ENCODE measurements at regions of chr9 and their contacts with region 1.

Region 1: DNA sequence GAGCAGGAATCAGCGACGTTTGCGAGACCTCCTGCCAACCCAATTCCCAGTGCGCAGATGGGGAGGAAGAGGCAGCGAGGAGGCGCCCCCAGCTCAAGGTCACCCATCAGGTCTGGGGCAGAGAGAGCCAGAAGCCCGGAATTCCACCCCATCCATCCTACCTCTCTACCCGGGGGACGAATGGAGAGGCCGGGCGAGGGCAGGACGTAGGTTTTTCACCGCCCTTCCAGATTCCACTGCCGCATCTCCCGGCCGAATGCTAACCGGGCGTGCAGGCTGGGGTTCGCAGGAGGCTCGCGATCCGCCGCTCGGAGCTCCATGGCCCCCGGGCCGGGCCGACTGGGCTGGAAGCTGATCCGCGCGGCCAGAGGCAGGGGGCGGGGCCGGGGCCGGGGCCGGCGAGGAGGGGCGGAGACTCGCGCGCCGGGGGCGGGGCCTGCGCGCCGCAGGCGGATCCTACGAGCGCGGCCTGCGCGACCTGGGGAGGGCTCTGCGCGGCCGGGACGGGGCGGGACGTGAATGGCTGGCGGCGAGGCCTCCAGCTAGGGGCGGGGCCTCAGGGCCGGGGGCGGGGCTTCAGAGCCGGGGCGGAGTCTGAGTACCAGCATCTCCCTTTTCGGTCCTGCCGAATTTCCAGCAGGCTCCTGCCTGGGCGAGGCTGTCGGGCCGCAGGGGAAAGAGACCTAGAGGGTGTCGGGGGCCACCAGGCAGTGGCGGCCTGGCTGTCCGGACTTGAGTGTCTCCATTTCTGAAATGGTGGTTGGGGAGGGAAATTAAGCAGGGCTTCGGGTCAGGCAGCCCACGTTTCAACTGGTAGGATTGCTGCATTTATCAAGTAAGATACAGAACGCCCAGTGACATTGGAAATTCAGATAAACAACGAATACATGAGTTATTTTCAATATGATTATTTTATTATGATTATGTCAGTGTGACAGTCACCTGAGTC is at the start of gene ST6GALNAC4:
- DNase-seq: peak; percentile 99
- CTCF ChIP-seq: no peak

Region 2: DNA sequence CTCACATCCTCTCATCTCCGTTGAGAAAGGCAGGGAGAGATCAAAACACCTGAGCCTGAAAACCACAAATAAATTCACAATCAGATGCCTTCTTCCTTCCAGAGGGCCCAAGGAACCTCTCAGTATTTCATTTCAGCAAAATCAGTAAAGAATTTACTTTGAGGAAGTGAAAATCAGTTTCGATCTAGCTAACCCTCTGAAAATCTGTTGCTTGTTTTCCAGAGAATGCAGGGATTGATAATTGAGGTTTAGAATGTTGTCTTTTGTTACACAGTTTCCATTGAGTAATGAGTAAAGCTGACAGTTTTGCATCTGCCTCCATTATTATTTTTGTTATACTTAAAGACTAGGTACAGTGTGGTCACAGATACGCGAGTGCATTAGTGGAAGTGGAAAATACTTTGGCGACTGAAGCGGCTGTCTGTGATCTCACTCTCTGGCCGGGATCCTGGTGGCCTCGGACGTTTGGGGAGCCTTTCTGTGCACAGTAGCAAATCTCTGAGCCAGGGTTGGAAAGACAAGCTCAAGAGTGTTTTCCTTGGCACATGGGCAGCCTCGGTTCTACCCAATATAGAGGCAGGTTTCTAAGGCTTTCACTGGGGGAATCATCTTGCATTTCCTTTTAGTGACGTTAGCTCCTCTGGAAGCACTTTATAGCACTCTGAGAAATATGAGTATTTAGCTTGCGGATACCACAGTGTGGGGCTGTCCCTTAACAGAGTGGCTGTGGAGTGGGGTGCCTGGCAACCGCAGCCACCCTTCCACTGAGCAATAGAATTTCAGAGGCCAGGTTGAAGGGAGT is 762.3 kb before region 1 on chr9:
- in situ Hi-C with region 1: no loop called
- DNase-seq: peak; percentile 46
- CTCF ChIP-seq: no peak

Region 3: GRCh38 chr9:127586537-127586936 is 330.4 kb before region 1 on chr9:
- in situ Hi-C with region 1: loop called (anchors 25 kb)
- DNase-seq: peak; percentile 65
- CTCF ChIP-seq: peak; percentile 87

Region 4: DNA sequence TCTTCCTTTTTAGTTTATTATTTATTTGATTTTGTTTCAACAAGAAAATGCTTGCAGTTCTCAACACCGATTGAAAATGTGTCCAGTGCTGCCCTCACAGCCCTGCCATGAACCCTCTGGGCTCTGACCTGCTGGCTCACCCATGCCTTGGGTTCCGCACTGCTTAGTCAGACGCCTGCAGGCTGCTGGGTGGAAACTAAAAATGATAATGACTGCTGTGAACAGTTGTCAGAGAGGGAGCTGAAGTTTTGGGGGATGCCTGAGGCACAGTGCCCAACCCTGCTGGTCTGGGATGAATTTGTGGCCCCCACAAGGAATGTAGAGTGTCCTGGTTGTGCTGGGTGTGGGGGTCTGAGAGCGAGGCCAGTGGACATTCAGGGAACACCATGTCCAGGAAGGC is 232.4 kb before region 1 on chr9:
- in situ Hi-C with region 1: no loop called
- DNase-seq: no peak
- CTCF ChIP-seq: no peak

Region 5: GRCh38 chr9:127785023-127785932 is 131.7 kb before region 1 on chr9:
- in situ Hi-C with region 1: loop called (anchors 10 kb)
- DNase-seq: peak; percentile 94
- CTCF ChIP-seq: peak; percentile 83

Region 6: GRCh38 chr9:127796225-127796813 is 120.6 kb before region 1 on chr9:
- in situ Hi-C with region 1: no loop called
- DNase-seq: no peak
- CTCF ChIP-seq: no peak

Region 7: DNA sequence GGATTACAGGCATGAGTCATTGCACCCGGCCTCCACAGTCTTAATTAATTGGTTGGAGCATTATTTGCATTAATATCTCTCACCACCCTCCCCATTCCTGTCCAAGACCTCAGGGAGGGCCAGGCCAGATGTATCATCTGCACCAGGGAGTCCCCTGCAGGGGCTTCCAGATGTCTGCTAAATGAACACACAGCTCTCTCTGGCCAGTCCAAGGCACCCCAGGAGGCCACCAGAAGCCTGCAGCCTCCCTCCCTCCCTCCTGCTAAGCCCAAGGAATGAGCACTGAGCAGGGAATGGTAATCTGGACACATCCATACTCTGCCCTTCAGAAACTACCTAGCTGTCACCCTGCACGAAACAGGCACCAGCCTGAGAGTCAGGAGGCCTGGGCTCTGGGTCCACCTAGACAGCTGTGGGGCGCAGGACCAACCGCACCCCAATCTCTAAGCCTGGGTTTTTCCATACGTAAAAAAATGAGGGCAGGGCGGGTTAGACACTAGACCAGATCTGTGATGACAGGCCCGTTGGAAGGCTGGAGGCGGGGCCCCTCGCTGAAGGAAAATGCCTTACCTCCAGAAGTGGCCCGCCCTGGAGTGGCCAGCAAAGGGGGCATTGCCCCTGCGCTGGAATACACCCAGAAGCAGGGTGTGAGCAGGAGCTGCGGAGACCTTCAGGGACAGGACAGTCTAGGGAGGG is 266.1 kb after region 1 on chr9:
- in situ Hi-C with region 1: no loop called
- DNase-seq: no peak
- CTCF ChIP-seq: no peak

Measured in GM13977 (cell line).